ENCODE measurements at regions of chr11 and their contacts with region 1.

Region 1: GRCh38 chr11:8964324-8965320 is at the start of gene TMEM9B:
- DNase-seq: peak; percentile 95 to 96
- ATAC-seq: peak; percentile 97
- H3K4me3 ChIP-seq: peak within 1 kb of the TSS; percentile 38 to 83
- H3K27ac ChIP-seq: peak within 1 kb of the TSS; percentile 83 to 88
- H3K4me1 ChIP-seq: peaks cover 0 to 5% of the 10 kb centered on the region in 2 donors
- H3K27me3 ChIP-seq: no peaks in the 10 kb centered on the region
- total RNA-seq, gene TMEM9B: 23.6 to 26.0 TPM

Region 2: GRCh38 chr11:8688414-8689362 is 275.9 kb before region 1 on chr11:
- intact Hi-C with region 1: loop called (anchors 5 to 10 kb)
- DNase-seq: peak; percentile 97 to 98
- ATAC-seq: peak; percentile 97
- H3K4me3 ChIP-seq: peak overlapping the region; percentile 32 to 65
- H3K27ac ChIP-seq: peak overlapping the region; percentile 18 to 92
- H3K4me1 ChIP-seq: no peaks in the 10 kb centered on the region
- H3K27me3 ChIP-seq: no peaks in the 10 kb centered on the region

Region 3: DNA sequence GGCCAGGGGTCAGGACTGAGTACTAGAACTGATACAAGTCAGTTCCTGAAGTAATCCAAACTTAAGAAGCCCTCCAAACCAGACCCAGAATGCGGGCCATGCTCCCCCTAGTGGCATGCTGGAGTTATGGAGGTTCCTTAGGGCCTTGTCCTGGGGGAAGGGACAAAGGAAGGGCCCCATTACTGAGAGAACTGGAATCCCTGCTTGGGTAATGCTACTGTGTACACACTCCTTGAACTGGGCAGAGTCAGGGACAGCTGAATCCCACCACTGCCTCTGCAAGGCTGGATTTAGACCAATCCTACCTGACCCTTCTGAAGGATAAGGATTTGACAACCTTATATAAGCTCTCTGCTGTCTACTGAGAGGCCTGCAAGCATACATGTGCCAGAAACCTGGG is 151.0 kb before region 1 on chr11:
- intact Hi-C with region 1: loop called in 1 of 2 experiments (anchors 10 kb)
- DNase-seq: peak; percentile 84 to 91
- ATAC-seq: peak; percentile 78
- H3K4me3 ChIP-seq: no peak overlapping the region
- H3K27ac ChIP-seq: no peak overlapping the region
- H3K4me1 ChIP-seq: no peaks in the 10 kb centered on the region
- H3K27me3 ChIP-seq: no peaks in the 10 kb centered on the region

Region 4: GRCh38 chr11:8911029-8911826 is 53.4 kb before region 1 on chr11 and contains the start of gene AKIP1:
- intact Hi-C with region 1: loop called (anchors 2 to 5 kb)
- DNase-seq: peak; percentile 98 to 99
- ATAC-seq: peak; percentile 98
- H3K4me3 ChIP-seq: peak within 1 kb of the TSS; percentile 43 to 52
- H3K27ac ChIP-seq: peak within 1 kb of the TSS; percentile 43 to 92
- H3K4me1 ChIP-seq: peaks cover 0 to 5% of the 10 kb centered on the region in 2 donors
- H3K27me3 ChIP-seq: no peaks in the 10 kb centered on the region
- total RNA-seq, gene AKIP1: 15.6 to 25.3 TPM

Region 5: DNA sequence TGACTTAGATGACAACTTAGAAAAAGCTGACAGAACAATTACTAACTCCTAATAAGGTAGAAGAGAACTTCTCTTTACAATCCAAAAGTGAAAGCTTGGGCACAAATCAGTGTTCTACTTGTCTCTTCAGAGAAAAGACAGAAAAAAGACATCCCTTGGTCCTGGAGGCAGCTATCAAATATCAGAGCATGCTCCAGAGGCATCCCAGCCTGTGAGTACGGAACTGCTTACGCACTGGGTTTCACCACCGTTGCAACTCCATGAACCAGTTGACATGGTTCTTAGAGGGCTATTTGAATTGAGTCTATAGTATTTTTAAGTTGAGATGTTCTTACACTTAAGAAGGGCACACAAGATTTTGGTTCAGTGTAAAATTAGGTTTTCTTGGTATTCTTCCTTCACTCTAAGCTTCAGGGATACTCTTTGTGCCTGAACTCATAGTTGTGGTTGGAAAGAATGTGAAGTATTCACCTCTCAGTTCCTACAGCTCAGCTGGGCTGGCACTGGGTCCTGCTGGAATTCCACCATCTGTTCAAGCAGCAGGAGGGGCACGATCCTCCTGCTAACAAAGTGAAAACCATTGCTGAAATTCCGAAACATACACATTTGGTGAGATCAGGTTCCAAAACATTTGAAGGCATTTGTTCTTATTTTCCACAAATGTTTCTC is 47.3 kb before region 1 on chr11:
- intact Hi-C with region 1: loop called (anchors 2 to 5 kb)
- DNase-seq: peak; percentile 67 to 82
- ATAC-seq: no peak
- H3K4me3 ChIP-seq: no peak overlapping the region
- H3K27ac ChIP-seq: peak overlapping the region; percentile 5 to 91
- H3K4me1 ChIP-seq: peaks cover 0 to 11% of the 10 kb centered on the region in 2 donors
- H3K27me3 ChIP-seq: no peaks in the 10 kb centered on the region

Region 6: DNA sequence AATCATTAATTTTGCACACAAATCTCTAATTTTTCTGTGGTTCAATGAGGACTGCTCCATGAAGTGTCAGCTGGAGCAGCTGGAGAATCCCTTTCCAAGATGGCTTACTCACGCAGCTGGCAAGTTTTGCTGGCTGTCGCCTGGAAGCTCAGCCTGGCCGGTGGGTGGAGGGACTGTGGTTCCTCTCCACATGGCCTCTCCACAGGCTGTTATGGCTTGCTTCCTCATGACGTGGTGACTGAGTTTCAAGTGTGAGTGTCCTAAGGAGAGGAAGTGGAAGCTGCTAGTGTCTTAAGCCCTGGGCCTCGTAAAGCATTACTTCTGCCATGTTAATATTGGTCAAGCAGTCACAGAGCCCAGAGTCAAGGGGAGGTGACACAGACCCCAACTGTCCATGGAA is 53.2 kb after region 1 on chr11:
- intact Hi-C with region 1: no loop called
- DNase-seq: peak; percentile 84 to 90
- ATAC-seq: peak; percentile 73
- H3K4me3 ChIP-seq: no peak overlapping the region
- H3K27ac ChIP-seq: no peak overlapping the region
- H3K4me1 ChIP-seq: no peaks in the 10 kb centered on the region
- H3K27me3 ChIP-seq: peaks cover 0 to 2% of the 10 kb centered on the region in 2 donors